Right ventricle myocardium inferior (tissue), 1 donor: ENCODE measurements at regions of chr6 and their contacts with region 1.

Region 1: GRCh38 chr6:78259935-78260334 is 607.1 kb downstream of the MEI4 start:
- DNase-seq: no peak
- ATAC-seq: no peak

Region 2: DNA sequence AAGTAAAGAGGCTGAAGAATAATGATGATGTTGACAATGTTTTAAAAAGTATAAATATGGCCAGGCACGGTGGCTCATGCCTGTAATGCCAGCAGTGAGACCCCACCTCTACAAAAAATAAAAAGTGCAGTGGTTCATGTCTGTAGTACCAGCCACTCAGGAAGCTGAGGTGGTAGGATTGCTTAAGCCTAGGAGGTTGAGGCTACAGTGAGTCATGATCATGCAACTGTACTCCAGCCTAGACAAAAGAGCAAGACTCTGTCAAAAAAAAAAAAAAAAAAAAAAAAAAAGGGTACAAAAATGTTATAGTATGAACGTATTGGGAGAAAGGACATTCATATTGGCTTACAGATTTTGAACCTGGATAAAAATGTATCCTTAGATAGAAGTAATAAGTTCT is 64.3 kb after region 1 on chr6:
- intact Hi-C with region 1: loop called (anchors 5 kb)
- DNase-seq: no peak
- ATAC-seq: no peak